Right cardiac atrium (tissue), 5 donors: ENCODE measurements at regions of chr3 and their contacts with region 1.

Region 1: GRCh38 chr3:14672588-14672987 is 2.4 kb upstream of the C3orf20 start:
- DNase-seq: no peak
- ATAC-seq: no peak
- H3K4me3 ChIP-seq: no peak overlapping the region
- H3K27ac ChIP-seq: no peak overlapping the region
- H3K4me1 ChIP-seq: no peaks in the 10 kb centered on the region
- H3K27me3 ChIP-seq: no peaks in the 10 kb centered on the region

Region 2: GRCh38 chr3:14369675-14370669 is 302.6 kb before region 1 on chr3:
- intact Hi-C with region 1: no loop called
- DNase-seq: peak in 2 of 3 donors; percentile 33 to 37
- ATAC-seq: no peak
- H3K4me3 ChIP-seq: no peak overlapping the region
- H3K27ac ChIP-seq: peak overlapping the region; percentile 19
- H3K4me1 ChIP-seq: peaks cover 16% of the 10 kb centered on the region
- H3K27me3 ChIP-seq: no peaks in the 10 kb centered on the region

Region 3: DNA sequence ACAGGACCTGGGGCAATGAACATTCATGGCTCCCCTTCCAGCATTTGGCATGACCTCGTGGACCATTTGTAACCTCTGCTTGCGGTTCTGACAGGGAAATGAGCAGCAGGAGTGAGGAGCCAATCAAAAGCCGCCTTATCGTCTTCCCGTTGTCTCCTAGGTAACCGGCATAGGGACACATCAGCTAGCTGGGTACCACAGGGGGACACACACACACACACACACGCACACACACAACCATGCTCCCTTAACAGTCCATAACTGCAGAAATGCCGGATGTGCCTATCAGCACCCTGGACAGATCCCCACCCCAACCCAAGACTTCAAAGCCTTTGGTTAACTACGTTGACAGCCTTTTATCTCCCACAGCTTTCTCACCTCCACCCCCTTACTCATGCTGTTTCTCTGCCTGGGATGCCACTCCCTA is 74.4 kb before region 1 on chr3:
- intact Hi-C with region 1: no loop called
- DNase-seq: no peak
- ATAC-seq: no peak
- H3K4me3 ChIP-seq: no peak overlapping the region
- H3K27ac ChIP-seq: no peak overlapping the region
- H3K4me1 ChIP-seq: no peaks in the 10 kb centered on the region
- H3K27me3 ChIP-seq: no peaks in the 10 kb centered on the region

Region 4: DNA sequence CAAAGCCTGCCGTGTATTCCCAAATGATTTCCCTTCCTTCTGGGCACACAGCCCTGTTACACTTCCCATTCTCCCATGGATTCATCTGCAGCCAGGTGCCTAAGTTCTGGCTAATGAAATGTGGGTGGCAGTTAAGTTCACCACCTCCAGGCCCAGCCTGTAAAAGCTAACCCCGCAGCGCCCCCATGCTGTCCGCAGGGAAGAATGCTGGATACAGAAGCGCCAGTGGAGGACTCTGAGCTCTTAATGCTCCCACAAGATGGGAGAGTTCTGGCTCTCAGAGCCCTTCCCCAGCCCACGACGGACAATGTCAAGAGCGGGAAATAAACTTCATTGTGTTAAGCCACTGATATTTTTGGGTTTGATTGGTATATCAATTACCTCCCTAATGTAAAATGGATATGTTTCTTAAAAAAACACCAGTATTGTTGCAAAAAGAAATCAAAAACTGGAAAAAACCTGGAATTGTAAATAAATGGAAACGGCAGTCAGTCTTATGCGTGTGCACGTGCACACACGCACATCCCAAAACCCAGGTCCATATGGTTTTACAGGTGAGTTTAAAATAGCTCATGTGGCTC is 108.4 kb after region 1 on chr3:
- intact Hi-C with region 1: loop called in 1 of 4 experiments (anchors 2 kb)
- DNase-seq: peak; percentile 61 to 73 (median 69)
- ATAC-seq: peak; percentile 74 to 87
- H3K4me3 ChIP-seq: no peak overlapping the region
- H3K27ac ChIP-seq: no peak overlapping the region
- H3K4me1 ChIP-seq: no peaks in the 10 kb centered on the region
- H3K27me3 ChIP-seq: no peaks in the 10 kb centered on the region

Region 5: GRCh38 chr3:14863333-14864100 is 190.9 kb after region 1 on chr3:
- intact Hi-C with region 1: no loop called
- DNase-seq: peak in 1 of 3 donors; percentile 59
- ATAC-seq: peak in 1 of 2 donors; percentile 17
- H3K4me3 ChIP-seq: no peak overlapping the region
- H3K27ac ChIP-seq: no peak overlapping the region
- H3K4me1 ChIP-seq: peaks cover 18% of the 10 kb centered on the region
- H3K27me3 ChIP-seq: no peaks in the 10 kb centered on the region

Region 6: DNA sequence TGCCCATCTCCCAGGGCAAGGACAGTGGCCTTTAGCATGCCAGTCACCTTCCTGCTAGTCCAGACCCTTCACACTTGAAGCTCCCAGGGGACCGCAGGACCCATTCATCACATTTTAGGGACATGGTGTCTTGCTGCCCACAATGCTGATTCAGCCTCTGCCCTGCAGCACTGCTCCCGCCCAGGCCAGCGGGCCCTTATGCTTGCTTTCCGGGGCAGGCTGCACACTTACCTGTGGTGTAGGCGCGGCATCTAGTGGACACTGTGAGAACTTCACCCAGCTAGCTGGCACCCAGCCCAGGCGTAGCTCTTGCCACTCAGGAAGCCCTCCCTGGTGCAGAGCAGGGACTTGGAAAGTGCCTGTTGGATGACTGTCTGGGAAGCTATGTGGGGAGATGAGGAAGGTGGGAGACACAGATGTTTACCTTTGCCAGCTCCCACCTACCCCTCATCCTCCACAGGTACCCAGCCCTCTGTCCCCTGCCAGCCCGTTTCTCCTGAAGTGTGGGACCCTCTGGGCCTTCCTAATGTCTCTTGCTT is 248.6 kb after region 1 on chr3:
- intact Hi-C with region 1: loop called (anchors 2 to 10 kb)
- DNase-seq: peak; percentile 87 to 96 (median 95)
- ATAC-seq: peak; percentile 91 to 93
- H3K4me3 ChIP-seq: no peak overlapping the region
- H3K27ac ChIP-seq: no peak overlapping the region
- H3K4me1 ChIP-seq: no peaks in the 10 kb centered on the region
- H3K27me3 ChIP-seq: no peaks in the 10 kb centered on the region

Region 7: DNA sequence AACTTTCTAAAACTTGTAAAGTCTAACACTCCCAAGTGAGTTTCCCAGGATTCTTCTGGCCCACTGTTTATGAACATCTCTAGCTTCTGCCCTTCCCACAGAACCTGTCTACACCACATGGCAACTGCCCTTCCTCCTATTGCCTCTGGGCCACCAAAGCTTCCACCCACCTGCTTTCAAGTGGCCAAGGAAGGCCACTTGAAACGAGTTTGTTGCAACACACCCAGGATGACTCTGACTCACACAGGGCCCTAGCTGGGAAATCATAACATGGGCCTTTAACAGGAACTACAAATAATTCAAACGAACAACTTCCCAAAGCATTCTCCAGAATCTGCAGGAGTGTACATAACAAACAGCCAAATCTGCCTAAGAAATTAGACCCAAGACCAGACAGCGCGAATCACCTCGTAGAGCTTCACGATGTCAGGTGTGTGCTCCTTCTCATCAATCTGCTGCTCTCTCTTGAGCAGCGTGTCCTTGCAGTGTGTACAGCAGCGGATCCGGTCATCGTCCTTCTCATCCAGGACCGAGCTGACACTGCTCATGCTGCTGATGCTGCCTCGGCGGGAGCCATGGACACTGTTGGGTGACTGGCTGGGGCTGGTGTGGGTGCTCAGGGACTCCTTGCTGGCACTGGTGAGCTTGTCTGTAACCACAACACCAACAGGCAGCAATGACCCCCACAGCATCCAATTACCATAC is 409.5 kb after region 1 on chr3:
- intact Hi-C with region 1: no loop called
- DNase-seq: no peak
- ATAC-seq: peak in 1 of 2 donors; percentile 13
- H3K4me3 ChIP-seq: no peak overlapping the region
- H3K27ac ChIP-seq: no peak overlapping the region
- H3K4me1 ChIP-seq: no peaks in the 10 kb centered on the region
- H3K27me3 ChIP-seq: no peaks in the 10 kb centered on the region